ENCODE measurements at regions of chr10 and their contacts with region 1.

Region 1: DNA sequence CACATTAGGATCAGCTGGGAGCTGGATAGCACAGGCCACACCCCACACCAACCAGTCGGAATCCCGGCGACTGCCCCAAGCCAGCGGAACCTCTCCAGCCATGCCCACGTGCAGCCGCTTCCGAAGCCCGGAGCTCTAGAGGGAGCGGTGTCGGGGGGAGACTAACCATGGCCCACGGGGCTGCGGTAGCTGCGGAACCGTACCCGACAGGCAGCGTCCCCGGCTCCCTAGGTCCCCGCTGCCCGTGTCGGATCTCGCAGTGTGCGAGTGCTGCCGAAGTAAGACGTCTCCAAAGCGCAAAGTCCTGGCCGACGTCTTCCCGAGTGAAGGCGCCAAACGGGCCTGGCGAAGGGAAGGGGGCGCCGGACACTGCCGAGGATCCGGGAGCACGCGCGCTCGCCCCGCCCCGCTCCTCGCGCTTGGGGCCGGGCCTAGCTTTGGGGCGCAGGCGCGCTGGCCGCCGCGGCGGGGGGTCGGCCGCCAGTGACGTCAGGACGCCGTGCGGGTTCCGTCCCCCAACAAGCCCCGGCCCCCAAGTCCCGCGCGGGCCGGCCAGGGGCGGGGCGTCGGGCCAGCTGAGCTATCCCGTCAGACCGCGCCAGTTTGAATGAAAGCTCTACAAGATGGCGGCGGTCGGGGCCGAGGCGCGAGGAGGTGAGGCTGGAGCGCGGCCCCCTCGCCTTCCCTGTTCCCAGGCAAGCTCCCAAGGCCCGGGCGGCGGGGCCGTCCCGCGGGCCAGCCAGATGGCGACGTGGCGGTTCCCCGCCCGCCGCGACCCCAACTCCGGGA is at the start of gene SUV39H2:
- DNase-seq: peak; percentile 95 to 96
- ATAC-seq: peak; percentile 91 to 92
- H3K4me3 ChIP-seq: peak within 1 kb of the TSS; percentile 96
- H3K27ac ChIP-seq: peak within 1 kb of the TSS; percentile 97 to 98
- H3K4me1 ChIP-seq: peaks cover 31% of the 10 kb centered on the region
- CTCF ChIP-seq: no peak
- EP300 ChIP-seq: no peak
- POLR2A ChIP-seq: peak; percentile 85
- RAD21 ChIP-seq: no peak
- polyA plus RNA-seq, gene SUV39H2: 21.3 and 23.2 TPM in 2 replicates

Region 2: GRCh38 chr10:14837757-14838581 is 40.5 kb before region 1 on chr10 and contains the starts of genes CDNF, HSPA14 and MSANTD7:
- CTCF ChIA-PET with region 1: interaction called, 3 read pairs
- POLR2A ChIA-PET with region 1: interaction called, 21 read pairs
- DNase-seq: peak; percentile 97 to 99
- ATAC-seq: peak; percentile 98
- H3K4me3 ChIP-seq: peak within 1 kb of the TSS; percentile 90
- H3K27ac ChIP-seq: peak within 1 kb of the TSS; percentile 86 to 94
- H3K4me1 ChIP-seq: peaks cover 8% of the 10 kb centered on the region; the same call in 1 of the 3 replicates
- CTCF ChIP-seq: no peak
- EP300 ChIP-seq: no peak
- POLR2A ChIP-seq: peak; percentile 86
- RAD21 ChIP-seq: no peak; a peak in 1 of 5 replicates
- polyA plus RNA-seq, gene CDNF: 1.8 and 2.0 TPM in 2 replicates
- polyA plus RNA-seq, gene HSPA14: 31.7 and 45.7 TPM in 2 replicates
- polyA plus RNA-seq, gene MSANTD7: 10.9 and 11.2 TPM in 2 replicates

Region 3: DNA sequence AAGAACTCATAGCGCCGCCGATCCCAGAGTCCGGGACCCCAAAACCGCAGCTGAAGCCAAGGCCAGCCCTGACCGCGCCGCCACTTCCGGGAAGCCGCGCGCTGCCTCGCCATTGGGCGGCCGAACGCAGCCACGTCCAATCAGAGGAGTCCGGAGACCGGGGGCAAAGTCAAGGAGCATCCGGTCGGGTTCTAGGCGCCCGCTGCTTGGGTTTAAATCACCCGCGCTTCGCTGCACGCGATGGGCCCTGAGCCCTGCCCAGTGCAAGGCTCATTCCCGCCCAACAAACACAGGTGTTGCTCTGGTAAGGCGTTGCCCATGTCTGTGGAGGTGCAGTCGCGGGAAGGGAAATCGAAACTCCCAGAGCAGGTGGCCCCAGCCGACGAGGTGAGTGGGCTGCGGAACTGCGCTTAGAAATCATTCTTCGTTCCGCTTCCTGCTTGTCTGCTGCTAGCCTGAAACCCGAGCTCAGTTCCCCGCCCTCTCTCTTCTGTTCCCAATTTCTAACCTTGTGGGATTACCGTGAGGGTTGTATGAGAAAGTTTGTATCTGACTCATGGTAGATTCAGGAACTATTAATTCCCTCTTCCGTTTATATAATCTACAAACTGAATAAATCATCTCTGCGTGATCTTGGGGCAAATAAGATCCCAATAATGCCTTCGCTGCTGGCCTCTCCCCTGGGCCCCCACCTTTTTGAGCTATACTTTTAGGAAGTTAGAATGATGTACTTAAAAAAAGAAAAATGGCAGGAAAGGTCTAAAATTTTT is 75.7 kb after region 1 on chr10 and contains the start of gene DCLRE1C:
- CTCF ChIA-PET with region 1: interaction called, 4 read pairs
- POLR2A ChIA-PET with region 1: interaction called, 22 read pairs
- DNase-seq: peak; percentile 89 to 91
- ATAC-seq: peak; percentile 95 to 99
- H3K4me3 ChIP-seq: peak within 1 kb of the TSS; percentile 75
- H3K27ac ChIP-seq: peak within 1 kb of the TSS; percentile 84 to 92
- H3K4me1 ChIP-seq: peaks cover 16% of the 10 kb centered on the region
- CTCF ChIP-seq: no peak
- EP300 ChIP-seq: no peak
- POLR2A ChIP-seq: peak; percentile 77
- RAD21 ChIP-seq: no peak
- polyA plus RNA-seq, gene DCLRE1C: 8.3 and 8.6 TPM in 2 replicates

Region 4: GRCh38 chr10:14959276-14960057 is 81.0 kb after region 1 on chr10 and contains the start of gene MEIG1:
- CTCF ChIA-PET with region 1: interaction called, 4 read pairs
- POLR2A ChIA-PET with region 1: interaction called, 22 read pairs
- DNase-seq: peak; percentile 95 to 96
- ATAC-seq: peak; percentile 96
- H3K4me3 ChIP-seq: peak within 1 kb of the TSS; percentile 56
- H3K27ac ChIP-seq: peak within 1 kb of the TSS; percentile 88 to 97
- H3K4me1 ChIP-seq: peaks cover 5% of the 10 kb centered on the region; the same call in 1 of the 3 replicates
- CTCF ChIP-seq: no peak
- EP300 ChIP-seq: no peak
- POLR2A ChIP-seq: peak; percentile 48
- RAD21 ChIP-seq: no peak
- polyA plus RNA-seq, gene MEIG1: 0.79 and 1.1 TPM in 2 replicates